WTC11 (cell line): ENCODE measurements at regions of chr4 and their contacts with region 1.

Region 1: GRCh38 chr4:3791978-3792542 is 25.9 kb downstream of the ADRA2C start:
- DNase-seq: peak; percentile 92
- ATAC-seq: peak; percentile 77
- H3K4me3 Mint-ChIP-seq: no peak overlapping the region
- H3K27ac Mint-ChIP-seq: no peak overlapping the region; the same call in 1 of the 2 replicates
- H3K4me1 Mint-ChIP-seq: peaks cover 7% of the 10 kb centered on the region
- H3K27me3 Mint-ChIP-seq: peaks cover 7% of the 10 kb centered on the region
- CTCF ChIP-seq: no peak

Region 2: DNA sequence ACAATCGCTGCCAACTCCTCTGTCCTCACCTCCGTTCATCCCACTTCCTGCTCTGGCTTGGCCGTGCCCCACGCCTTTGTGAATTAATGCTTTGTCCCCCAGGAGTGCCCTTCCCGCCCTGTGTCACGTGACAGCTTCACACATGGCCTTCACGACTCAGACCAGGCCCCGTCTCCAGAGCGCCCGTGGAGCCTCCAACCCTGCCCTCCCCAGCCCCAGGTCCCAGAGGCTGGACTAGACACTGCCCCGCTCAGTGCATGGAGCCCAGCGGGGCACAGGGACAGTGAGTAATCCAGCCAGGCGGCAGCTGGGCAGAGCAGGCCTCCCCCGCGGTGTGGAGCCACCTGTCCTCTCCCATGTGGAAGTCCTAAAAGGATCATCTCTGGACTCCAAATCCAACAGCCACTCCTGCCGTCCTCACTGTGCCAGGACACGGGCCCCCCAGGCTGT is 18.5 kb before region 1 on chr4:
- CTCF ChIA-PET with region 1: interaction called, 87 read pairs
- POLR2A ChIA-PET with region 1: no interaction called
- DNase-seq: no peak
- ATAC-seq: no peak
- H3K4me3 Mint-ChIP-seq: no peak overlapping the region
- H3K27ac Mint-ChIP-seq: no peak overlapping the region
- H3K4me1 Mint-ChIP-seq: peaks cover 15% of the 10 kb centered on the region
- H3K27me3 Mint-ChIP-seq: peaks cover 3% of the 10 kb centered on the region
- CTCF ChIP-seq: no peak

Region 3: DNA sequence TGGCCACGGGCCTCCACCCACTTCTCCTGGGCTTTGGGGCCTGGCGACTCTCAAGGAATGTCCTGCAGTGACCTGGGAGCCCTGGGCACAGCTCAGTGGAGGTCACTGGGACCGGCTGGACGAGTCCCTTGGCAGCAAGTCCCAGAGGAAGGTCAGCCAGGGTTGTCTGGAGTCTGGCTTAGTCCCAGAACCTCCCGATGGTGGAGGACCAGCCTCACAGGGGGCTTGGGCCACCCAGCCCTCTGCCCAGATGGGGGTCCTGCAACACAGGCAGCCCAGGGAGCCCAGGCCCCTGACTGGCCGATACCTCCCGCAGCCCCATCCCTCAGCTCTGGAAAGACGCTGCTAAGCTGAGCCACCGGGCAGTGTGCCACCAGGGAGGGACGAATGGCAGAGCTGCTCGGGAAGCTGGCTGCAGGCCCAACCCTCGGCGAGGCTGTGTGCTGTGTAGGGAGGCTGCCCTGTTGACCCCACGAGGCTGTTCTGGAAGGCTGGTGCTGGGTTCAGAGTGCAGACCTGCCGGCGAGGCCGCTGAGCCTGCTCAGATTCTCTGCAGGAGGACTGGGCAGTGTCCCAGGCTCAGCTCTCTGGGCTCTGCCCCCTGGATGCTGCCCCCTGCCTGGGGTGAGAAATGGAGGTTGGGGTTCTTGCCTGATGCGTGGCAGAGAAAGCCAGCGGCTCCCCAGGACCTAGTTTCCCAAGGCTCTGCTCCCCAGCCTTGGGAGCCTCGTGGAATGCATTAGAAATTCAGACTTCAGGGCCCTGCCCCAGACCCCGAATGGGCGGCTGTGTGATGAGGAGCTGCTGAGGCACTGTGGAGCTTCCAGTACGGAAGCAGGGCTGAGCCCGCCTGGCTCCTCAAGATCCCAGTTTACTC is 35.8 kb after region 1 on chr4:
- CTCF ChIA-PET with region 1: interaction called, 14 read pairs
- POLR2A ChIA-PET with region 1: no interaction called
- DNase-seq: no peak
- ATAC-seq: no peak
- H3K4me3 Mint-ChIP-seq: no peak overlapping the region
- H3K27ac Mint-ChIP-seq: no peak overlapping the region
- H3K4me1 Mint-ChIP-seq: peaks cover 23% of the 10 kb centered on the region
- H3K27me3 Mint-ChIP-seq: no peaks in the 10 kb centered on the region; the same call in 1 of the 2 replicates
- CTCF ChIP-seq: no peak

Region 4: GRCh38 chr4:3851211-3851610 is 59.2 kb after region 1 on chr4:
- CTCF ChIA-PET with region 1: interaction called, 83 read pairs
- POLR2A ChIA-PET with region 1: no interaction called
- DNase-seq: peak; percentile 63
- ATAC-seq: peak; percentile 70
- H3K4me3 Mint-ChIP-seq: no peak overlapping the region
- H3K27ac Mint-ChIP-seq: peak overlapping the region; percentile 22
- H3K4me1 Mint-ChIP-seq: peaks cover 51% of the 10 kb centered on the region
- H3K27me3 Mint-ChIP-seq: peaks cover 27% of the 10 kb centered on the region
- CTCF ChIP-seq: no peak

Region 5: GRCh38 chr4:3871181-3871871 is 79.3 kb after region 1 on chr4:
- CTCF ChIA-PET with region 1: interaction called, 10 read pairs
- POLR2A ChIA-PET with region 1: no interaction called
- DNase-seq: peak; percentile 91
- ATAC-seq: peak; percentile 61
- H3K4me3 Mint-ChIP-seq: peak overlapping the region; percentile 71
- H3K27ac Mint-ChIP-seq: no peak overlapping the region
- H3K4me1 Mint-ChIP-seq: peaks cover 25% of the 10 kb centered on the region
- H3K27me3 Mint-ChIP-seq: peaks cover 36% of the 10 kb centered on the region
- CTCF ChIP-seq: no peak